ENCODE measurements at regions of chr22 and their contacts with region 1.

Region 1: DNA sequence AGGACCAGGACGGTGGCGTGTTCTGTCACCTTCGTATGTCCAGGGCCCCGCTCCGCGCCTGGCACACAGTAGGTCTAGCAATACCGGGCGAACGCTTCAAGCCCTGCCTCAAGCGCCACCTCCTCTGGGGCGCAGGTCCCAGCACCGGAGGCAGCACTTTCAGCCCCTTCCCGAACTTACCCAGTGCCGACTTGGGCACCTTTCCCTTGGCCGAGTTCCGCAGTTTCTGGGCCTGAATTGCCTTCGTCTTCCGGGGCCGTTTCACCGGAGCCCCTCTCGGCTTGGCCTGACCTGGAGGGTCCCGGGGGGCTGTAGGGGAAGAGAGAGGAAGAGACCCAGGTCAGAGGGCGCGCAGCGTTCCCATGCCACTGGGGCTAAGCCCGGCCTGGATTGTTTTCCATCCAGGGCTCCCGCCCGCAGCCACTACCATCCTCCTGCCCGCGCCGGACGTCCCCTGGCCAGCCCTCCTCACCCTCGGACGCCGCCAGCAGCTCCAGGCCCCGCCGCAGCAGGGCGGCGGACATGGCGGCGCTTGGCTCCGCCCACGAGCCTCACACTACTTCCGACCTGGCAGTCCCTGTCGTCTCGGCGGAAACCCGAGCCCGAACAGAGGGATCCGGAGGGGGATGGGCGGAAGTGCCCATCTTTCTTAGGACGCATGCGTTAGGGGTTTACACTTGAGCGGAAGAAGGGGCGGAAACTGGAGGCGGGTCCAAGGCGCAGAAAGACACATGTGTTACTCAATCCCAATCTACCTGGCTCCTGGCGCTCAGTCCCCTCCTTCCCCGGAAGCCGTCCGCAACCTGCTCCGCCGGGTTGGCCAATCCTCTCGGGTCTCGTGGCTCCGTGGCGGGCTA is at the start of gene RPS19BP1:
- DNase-seq: peak; percentile 98
- H3K4me3 ChIP-seq: peak within 1 kb of the TSS; percentile 70 to 83 (median 82)
- H3K27ac ChIP-seq: peak within 1 kb of the TSS; percentile 74
- H3K4me1 ChIP-seq: peaks cover 30% of the 10 kb centered on the region
- H3K27me3 ChIP-seq: no peaks in the 10 kb centered on the region
- CTCF ChIP-seq: peak in 1 of 2 donors; percentile 1
- POLR2A ChIP-seq: peak; percentile 96
- total RNA-seq, gene RPS19BP1: 63.0 and 66.6 TPM in 2 replicates

Region 2: GRCh38 chr22:39319270-39320022 is 213.0 kb before region 1 on chr22 and contains the start of gene RPL3:
- CTCF ChIA-PET with region 1: interaction called, 19 read pairs
- POLR2A ChIA-PET with region 1: interaction called, 7 read pairs
- dilution Hi-C with region 1: no loop called
- intact Hi-C with region 1: no loop called
- DNase-seq: peak; percentile 99
- H3K4me3 ChIP-seq: peak within 1 kb of the TSS; percentile 87 to 98 (median 96)
- H3K27ac ChIP-seq: peak within 1 kb of the TSS; percentile 96
- H3K4me1 ChIP-seq: peaks cover 30% of the 10 kb centered on the region
- H3K27me3 ChIP-seq: no peaks in the 10 kb centered on the region
- CTCF ChIP-seq: peak in 1 of 2 donors; percentile 5
- POLR2A ChIP-seq: peak; percentile 100
- total RNA-seq, gene RPL3: 1,954 and 2,068 TPM in 2 replicates

Region 3: DNA sequence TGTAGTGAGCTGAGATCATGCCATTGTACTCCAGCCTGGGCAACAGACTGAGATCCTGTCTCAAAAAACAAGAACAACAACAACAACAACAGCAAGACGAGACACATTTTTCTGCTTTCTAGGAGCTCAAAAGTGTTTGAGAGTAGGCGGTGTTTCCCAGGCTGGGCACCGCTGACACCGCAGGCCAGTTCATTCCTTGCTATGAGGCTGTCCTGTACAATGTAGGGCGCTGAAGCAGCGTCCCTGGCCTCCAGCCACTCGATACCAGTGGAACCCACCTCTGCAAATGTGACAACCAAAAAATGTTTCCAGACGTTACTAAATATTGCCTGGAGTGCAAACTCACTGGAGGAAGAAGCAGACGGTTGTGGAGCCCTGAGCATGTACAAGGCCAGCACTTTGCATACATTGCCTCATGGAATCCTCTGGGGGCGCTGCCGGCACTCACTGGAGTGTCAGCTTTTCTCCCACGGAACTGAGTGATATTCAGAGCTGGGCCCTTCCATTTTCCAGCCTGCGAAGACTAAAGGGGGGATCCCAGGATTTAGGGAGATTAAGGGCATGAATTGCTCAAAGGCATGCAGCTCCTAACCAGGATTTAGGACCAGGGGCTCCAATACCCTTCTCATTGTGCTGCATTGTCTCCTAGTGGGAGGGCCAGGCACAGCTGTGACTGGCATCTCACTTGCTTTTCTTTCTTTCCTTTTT is 36.2 kb before region 1 on chr22:
- CTCF ChIA-PET with region 1: interaction called, 197 read pairs
- POLR2A ChIA-PET with region 1: no interaction called
- dilution Hi-C with region 1: no loop called
- intact Hi-C with region 1: loop called (anchors 1 kb)
- DNase-seq: peak; percentile 60
- H3K4me3 ChIP-seq: no peak overlapping the region
- H3K27ac ChIP-seq: no peak overlapping the region
- H3K4me1 ChIP-seq: no peaks in the 10 kb centered on the region
- H3K27me3 ChIP-seq: peaks cover 0 to 3% of the 10 kb centered on the region in 2 experiments
- CTCF ChIP-seq: peak; percentile 84 to 85
- POLR2A ChIP-seq: no peak

Region 4: GRCh38 chr22:39520054-39520891 is 12.2 kb before region 1 on chr22 and contains the start of gene ATF4:
- CTCF ChIA-PET with region 1: interaction called, 58 read pairs
- POLR2A ChIA-PET with region 1: interaction called, 13 read pairs
- dilution Hi-C with region 1: no loop called
- intact Hi-C with region 1: loop called (anchors 1 kb)
- DNase-seq: peak; percentile 98
- H3K4me3 ChIP-seq: peak within 1 kb of the TSS; percentile 59 to 96 (median 92)
- H3K27ac ChIP-seq: peak within 1 kb of the TSS; percentile 93
- H3K4me1 ChIP-seq: peaks cover 15% of the 10 kb centered on the region
- H3K27me3 ChIP-seq: no peaks in the 10 kb centered on the region
- CTCF ChIP-seq: no peak
- POLR2A ChIP-seq: peak; percentile 97
- total RNA-seq, gene ATF4: 312 and 324 TPM in 2 replicates

Region 5: DNA sequence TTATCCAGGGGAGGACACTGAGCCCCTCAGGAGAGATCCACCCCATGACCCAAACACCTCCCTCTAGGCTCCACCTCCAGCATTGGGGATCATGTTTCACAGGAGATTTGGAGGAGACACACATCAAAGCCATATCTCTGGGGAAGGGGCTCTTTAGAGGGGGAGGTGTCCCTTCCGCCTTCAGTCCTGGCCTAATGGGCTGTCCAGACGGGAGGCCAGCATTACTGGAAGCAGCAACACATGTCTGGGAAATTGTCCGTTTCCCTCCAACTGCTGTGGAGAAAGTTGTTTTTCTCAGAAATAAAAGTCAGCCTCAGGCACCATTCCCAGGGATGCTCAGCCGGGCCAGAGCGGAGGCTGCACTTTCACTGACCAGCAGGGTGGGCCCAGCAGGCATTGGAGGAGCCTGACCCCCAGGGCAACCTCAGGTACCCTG is 47.6 kb after region 1 on chr22:
- CTCF ChIA-PET with region 1: no interaction called
- POLR2A ChIA-PET with region 1: no interaction called
- dilution Hi-C with region 1: no loop called
- intact Hi-C with region 1: no loop called
- DNase-seq: no peak
- H3K4me3 ChIP-seq: no peak overlapping the region
- H3K27ac ChIP-seq: no peak overlapping the region
- H3K4me1 ChIP-seq: peaks cover 2% of the 10 kb centered on the region
- H3K27me3 ChIP-seq: peaks cover 0 to 3% of the 10 kb centered on the region in 2 experiments
- CTCF ChIP-seq: no peak
- POLR2A ChIP-seq: no peak

Region 6: DNA sequence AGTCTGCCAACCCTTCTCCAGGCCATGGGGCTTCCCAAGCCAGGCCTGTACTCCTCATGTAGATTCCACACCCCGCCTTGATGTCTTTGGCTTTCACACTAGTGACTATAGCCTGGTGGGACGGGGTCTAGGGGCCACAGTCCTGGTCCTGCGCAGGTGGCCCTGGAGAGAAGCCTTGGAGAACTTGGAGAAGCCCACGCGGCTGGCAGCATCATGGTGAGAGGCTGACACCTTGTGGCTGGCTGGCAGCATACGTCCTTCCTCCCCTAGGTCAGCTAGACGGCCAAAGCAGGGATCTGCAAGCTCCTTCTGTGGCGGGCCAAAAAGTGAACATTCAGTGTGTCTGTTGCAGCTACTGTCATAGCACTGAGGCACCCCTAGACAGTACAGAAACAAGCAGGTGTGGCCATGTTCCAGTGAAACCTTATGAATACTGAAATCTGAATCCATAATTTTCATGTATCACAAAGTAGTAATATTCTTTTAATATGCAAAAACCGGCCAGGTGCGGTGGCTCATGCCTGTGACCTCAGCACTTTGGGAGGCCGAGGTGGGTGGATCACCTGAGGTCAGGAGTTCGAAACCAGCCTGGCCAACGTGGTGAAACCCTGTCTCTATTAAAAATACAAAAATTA is 504.3 kb after region 1 on chr22:
- CTCF ChIA-PET with region 1: interaction called, 69 read pairs
- POLR2A ChIA-PET with region 1: interaction called, 3 read pairs
- dilution Hi-C with region 1: no loop called
- intact Hi-C with region 1: loop called (anchors 1 kb)
- DNase-seq: peak; percentile 69
- H3K4me3 ChIP-seq: no peak overlapping the region
- H3K27ac ChIP-seq: no peak overlapping the region
- H3K4me1 ChIP-seq: peaks cover 11% of the 10 kb centered on the region
- H3K27me3 ChIP-seq: peaks cover 3 to 24% of the 10 kb centered on the region in 2 experiments
- CTCF ChIP-seq: peak; percentile 62 to 84
- POLR2A ChIP-seq: no peak

Region 7: GRCh38 chr22:40346178-40347118 is 814.0 kb after region 1 on chr22 and contains the start of gene ADSL:
- CTCF ChIA-PET with region 1: interaction called, 7 read pairs
- POLR2A ChIA-PET with region 1: no interaction called
- dilution Hi-C with region 1: no loop called
- intact Hi-C with region 1: loop called (anchors 5 kb)
- DNase-seq: peak; percentile 85
- H3K4me3 ChIP-seq: peak within 1 kb of the TSS; percentile 76 to 98 (median 90)
- H3K27ac ChIP-seq: peak within 1 kb of the TSS; percentile 51
- H3K4me1 ChIP-seq: peaks cover 16% of the 10 kb centered on the region
- H3K27me3 ChIP-seq: no peaks in the 10 kb centered on the region
- CTCF ChIP-seq: peak in 1 of 2 donors; percentile 34
- POLR2A ChIP-seq: peak; percentile 97
- total RNA-seq, gene ADSL: 86.2 and 103 TPM in 2 replicates

Measured in endothelial cell of umbilical vein (primary cell).